Naive thymus-derived CD4-positive, alpha-beta T cell (primary cell): ENCODE measurements at regions of chr4 and their contacts with region 1.

Region 1: GRCh38 chr4:113781439-113782040 is 20.0 kb upstream of the CAMK2D start:
- DNase-seq: peak in 5 of 9 donors; percentile 21 to 28 (median 27)
- ATAC-seq: peak; percentile 41
- H3K4me3 ChIP-seq: no peak overlapping the region
- H3K4me3 Mint-ChIP-seq: no peak overlapping the region
- H3K27ac ChIP-seq: no peak overlapping the region
- H3K27ac Mint-ChIP-seq: no peak overlapping the region
- H3K4me1 ChIP-seq: no peaks in the 10 kb centered on the region
- H3K4me1 Mint-ChIP-seq: peaks cover 5 to 24% (median 12%) of the 10 kb centered on the region in 7 donors
- H3K27me3 ChIP-seq: no peaks in the 10 kb centered on the region
- H3K27me3 Mint-ChIP-seq: no peaks in the 10 kb centered on the region

Region 2: GRCh38 chr4:112704991-112705845 is 1076.3 kb before region 1 on chr4:
- CTCF ChIA-PET with region 1: no interaction called
- POLR2A ChIA-PET with region 1: no interaction called
- intact Hi-C with region 1: no loop called
- DNase-seq: peak in 2 of 9 donors; percentile 2
- ATAC-seq: no peak
- H3K4me3 ChIP-seq: peak overlapping the region; percentile 31
- H3K4me3 Mint-ChIP-seq: peak overlapping the region; percentile 71 to 90 (median 84)
- H3K27ac ChIP-seq: no peak overlapping the region
- H3K27ac Mint-ChIP-seq: peak overlapping the region in 1 of 9 donors; percentile 46
- H3K4me1 ChIP-seq: peaks cover 5% of the 10 kb centered on the region in 2 donors
- H3K4me1 Mint-ChIP-seq: peaks cover 14 to 21% (median 18%) of the 10 kb centered on the region in 7 donors
- H3K27me3 ChIP-seq: peaks cover 0 to 17% of the 10 kb centered on the region in 2 donors
- H3K27me3 Mint-ChIP-seq: peaks cover 58 to 68% (median 60%) of the 10 kb centered on the region in 5 donors

Region 3: DNA sequence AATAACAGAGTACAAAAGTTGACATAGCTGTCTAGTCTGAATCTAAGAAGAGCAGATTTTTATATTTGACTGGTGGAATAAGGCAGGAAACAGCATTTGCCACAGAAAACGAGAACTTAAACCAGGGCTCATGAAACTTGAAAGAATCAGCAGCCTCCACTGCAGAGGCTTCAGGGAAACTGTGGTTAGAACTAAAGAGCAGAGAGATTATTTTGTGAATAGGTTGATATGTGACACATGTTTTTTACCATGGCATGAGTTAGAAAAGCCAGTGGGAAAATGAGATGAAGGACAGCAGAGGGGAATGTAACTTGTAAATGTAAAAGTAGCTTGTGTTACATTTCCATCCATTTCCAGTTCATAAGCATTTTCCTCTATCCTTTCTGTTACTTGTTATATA is 43.7 kb after region 1 on chr4:
- CTCF ChIA-PET with region 1: no interaction called
- POLR2A ChIA-PET with region 1: no interaction called
- intact Hi-C with region 1: loop called in 1 of 2 experiments (anchors 2 kb)
- DNase-seq: peak in 7 of 9 donors; percentile 10 to 63 (median 52)
- ATAC-seq: peak; percentile 77
- H3K4me3 ChIP-seq: no peak overlapping the region
- H3K4me3 Mint-ChIP-seq: peak overlapping the region in 9 of 10 donors; percentile 3 to 70 (median 57)
- H3K27ac ChIP-seq: peak overlapping the region; percentile 26
- H3K27ac Mint-ChIP-seq: peak overlapping the region in 8 of 9 donors; percentile 5 to 88 (median 38)
- H3K4me1 ChIP-seq: peaks cover 7 to 34% of the 10 kb centered on the region in 2 donors
- H3K4me1 Mint-ChIP-seq: peaks cover 29 to 52% (median 47%) of the 10 kb centered on the region in 7 donors
- H3K27me3 ChIP-seq: no peaks in the 10 kb centered on the region
- H3K27me3 Mint-ChIP-seq: peaks cover 0 to 5% (median 0%) of the 10 kb centered on the region in 5 donors

Region 4: GRCh38 chr4:113901994-113902787 is 120.7 kb after region 1 on chr4:
- CTCF ChIA-PET with region 1: interaction called, 4 read pairs
- POLR2A ChIA-PET with region 1: interaction called, 4 read pairs
- intact Hi-C with region 1: loop called in 1 of 2 experiments (anchors 5 kb)
- DNase-seq: peak; percentile 27 to 86 (median 72)
- ATAC-seq: peak; percentile 88
- H3K4me3 ChIP-seq: peak overlapping the region; percentile 7
- H3K4me3 Mint-ChIP-seq: peak overlapping the region; percentile 32 to 78 (median 70)
- H3K27ac ChIP-seq: peak overlapping the region; percentile 65
- H3K27ac Mint-ChIP-seq: peak overlapping the region; percentile 74 to 99 (median 96)
- H3K4me1 ChIP-seq: peaks cover 65 to 72% of the 10 kb centered on the region in 2 donors
- H3K4me1 Mint-ChIP-seq: peaks cover 23 to 87% (median 82%) of the 10 kb centered on the region in 7 donors
- H3K27me3 ChIP-seq: no peaks in the 10 kb centered on the region
- H3K27me3 Mint-ChIP-seq: no peaks in the 10 kb centered on the region

Region 5: GRCh38 chr4:113908829-113909228 is 127.3 kb after region 1 on chr4:
- CTCF ChIA-PET with region 1: interaction called, 3 read pairs
- POLR2A ChIA-PET with region 1: interaction called, 3 read pairs
- intact Hi-C with region 1: loop called (anchors 1 to 5 kb)
- DNase-seq: peak in 5 of 9 donors; percentile 10 to 31 (median 26)
- ATAC-seq: no peak
- H3K4me3 ChIP-seq: no peak overlapping the region
- H3K4me3 Mint-ChIP-seq: no peak overlapping the region
- H3K27ac ChIP-seq: no peak overlapping the region
- H3K27ac Mint-ChIP-seq: peak overlapping the region in 2 of 9 donors; percentile 2 to 7
- H3K4me1 ChIP-seq: peaks cover 12 to 24% of the 10 kb centered on the region in 2 donors
- H3K4me1 Mint-ChIP-seq: peaks cover 6 to 57% (median 46%) of the 10 kb centered on the region in 7 donors
- H3K27me3 ChIP-seq: no peaks in the 10 kb centered on the region
- H3K27me3 Mint-ChIP-seq: no peaks in the 10 kb centered on the region

Region 6: DNA sequence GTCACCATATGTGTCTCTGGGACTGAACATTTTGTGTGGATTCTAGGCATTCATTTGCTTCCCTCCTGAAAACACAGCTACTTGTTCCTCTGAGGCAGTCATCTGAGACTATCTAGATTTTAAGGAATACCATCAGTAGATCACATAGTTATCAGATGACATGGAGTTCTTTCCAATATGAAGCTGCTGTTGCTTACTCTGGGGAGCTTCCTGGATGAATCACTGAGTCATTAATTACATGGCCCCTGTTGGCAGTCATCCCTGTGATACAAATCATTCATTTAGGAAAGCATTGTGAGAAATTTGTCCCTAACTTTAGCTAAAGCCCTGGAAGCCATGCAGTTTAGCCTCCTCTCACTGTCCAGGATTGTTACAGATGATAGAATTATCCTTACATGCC is 296.1 kb after region 1 on chr4:
- CTCF ChIA-PET with region 1: no interaction called
- POLR2A ChIA-PET with region 1: no interaction called
- intact Hi-C with region 1: loop called in 1 of 2 experiments (anchors 5 kb)
- DNase-seq: no peak
- ATAC-seq: no peak
- H3K4me3 ChIP-seq: no peak overlapping the region
- H3K4me3 Mint-ChIP-seq: no peak overlapping the region
- H3K27ac ChIP-seq: no peak overlapping the region
- H3K27ac Mint-ChIP-seq: no peak overlapping the region
- H3K4me1 ChIP-seq: no peaks in the 10 kb centered on the region
- H3K4me1 Mint-ChIP-seq: no peaks in the 10 kb centered on the region
- H3K27me3 ChIP-seq: no peaks in the 10 kb centered on the region
- H3K27me3 Mint-ChIP-seq: peaks cover 0 to 22% (median 0%) of the 10 kb centered on the region in 5 donors

Region 7: DNA sequence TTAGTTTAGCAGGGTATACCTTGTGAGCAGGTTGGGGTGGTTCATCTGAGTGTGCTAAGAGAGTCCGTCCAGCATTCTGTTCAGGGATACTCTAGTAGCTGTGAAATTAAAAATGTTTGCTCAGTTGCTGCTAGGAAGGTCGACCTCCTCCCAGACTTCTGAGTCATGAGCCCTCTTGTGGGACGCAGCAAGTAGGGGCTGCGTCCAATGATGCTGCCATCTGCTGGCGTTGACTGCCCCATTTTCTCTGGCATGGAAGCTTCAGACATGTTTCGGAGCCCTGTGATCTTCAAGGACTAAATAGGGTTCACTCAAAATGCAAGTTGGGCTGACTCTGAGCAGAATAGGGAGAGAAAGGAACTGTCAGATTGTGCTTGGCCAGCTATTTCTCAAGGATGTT is 398.9 kb after region 1 on chr4:
- CTCF ChIA-PET with region 1: interaction called, 3 read pairs
- POLR2A ChIA-PET with region 1: no interaction called
- intact Hi-C with region 1: loop called in 1 of 2 experiments (anchors 5 kb)
- DNase-seq: peak in 6 of 9 donors; percentile 1 to 27 (median 16)
- ATAC-seq: peak; percentile 29
- H3K4me3 ChIP-seq: no peak overlapping the region
- H3K4me3 Mint-ChIP-seq: no peak overlapping the region
- H3K27ac ChIP-seq: no peak overlapping the region
- H3K27ac Mint-ChIP-seq: no peak overlapping the region
- H3K4me1 ChIP-seq: no peaks in the 10 kb centered on the region
- H3K4me1 Mint-ChIP-seq: no peaks in the 10 kb centered on the region
- H3K27me3 ChIP-seq: no peaks in the 10 kb centered on the region
- H3K27me3 Mint-ChIP-seq: peaks cover 0 to 8% (median 0%) of the 10 kb centered on the region in 5 donors